ENCODE measurements at regions of chr12 and their contacts with region 1.

Region 1: GRCh38 chr12:49967042-49967776 is 5.5 kb downstream of the AQP5 start:
- DNase-seq: peak; percentile 86 to 95 (median 90)
- ATAC-seq: peak; percentile 61 to 84 (median 78)
- H3K4me3 ChIP-seq: peak overlapping the region in 11 of 12 donors; percentile 6 to 50 (median 37)
- H3K27ac ChIP-seq: no peak overlapping the region
- H3K4me1 ChIP-seq: peaks cover 0 to 22% (median 12%) of the 10 kb centered on the region in 12 donors
- H3K27me3 ChIP-seq: peaks cover 0 to 44% (median 7%) of the 10 kb centered on the region in 9 donors
- CTCF ChIP-seq: peak; percentile 63 to 89 (median 76)
- POLR2A ChIP-seq: no peak

Region 2: GRCh38 chr12:49580572-49581535 is 386.4 kb before region 1 on chr12:
- intact Hi-C with region 1: no loop called
- DNase-seq: peak in 4 of 5 donors; percentile 76 to 83 (median 80)
- ATAC-seq: peak; percentile 68 to 80 (median 79)
- H3K4me3 ChIP-seq: no peak overlapping the region
- H3K27ac ChIP-seq: peak overlapping the region in 9 of 12 donors; percentile 16 to 77 (median 36)
- H3K4me1 ChIP-seq: peaks cover 0 to 57% (median 30%) of the 10 kb centered on the region in 12 donors
- H3K27me3 ChIP-seq: no peaks in the 10 kb centered on the region
- CTCF ChIP-seq: peak; percentile 67 to 88 (median 79)
- POLR2A ChIP-seq: no peak

Region 3: GRCh38 chr12:49866859-49867579 is 100.2 kb before region 1 on chr12:
- intact Hi-C with region 1: loop called in 7 of 10 experiments (anchors 2 to 5 kb)
- DNase-seq: peak; percentile 67 to 79 (median 73)
- ATAC-seq: peak in 2 of 4 donors; percentile 17
- H3K4me3 ChIP-seq: no peak overlapping the region
- H3K27ac ChIP-seq: no peak overlapping the region
- H3K4me1 ChIP-seq: peaks cover 4 to 37% (median 29%) of the 10 kb centered on the region in 12 donors
- H3K27me3 ChIP-seq: peaks cover 0 to 6% (median 0%) of the 10 kb centered on the region in 9 donors
- CTCF ChIP-seq: peak; percentile 94 to 99 (median 98)
- POLR2A ChIP-seq: no peak

Region 4: DNA sequence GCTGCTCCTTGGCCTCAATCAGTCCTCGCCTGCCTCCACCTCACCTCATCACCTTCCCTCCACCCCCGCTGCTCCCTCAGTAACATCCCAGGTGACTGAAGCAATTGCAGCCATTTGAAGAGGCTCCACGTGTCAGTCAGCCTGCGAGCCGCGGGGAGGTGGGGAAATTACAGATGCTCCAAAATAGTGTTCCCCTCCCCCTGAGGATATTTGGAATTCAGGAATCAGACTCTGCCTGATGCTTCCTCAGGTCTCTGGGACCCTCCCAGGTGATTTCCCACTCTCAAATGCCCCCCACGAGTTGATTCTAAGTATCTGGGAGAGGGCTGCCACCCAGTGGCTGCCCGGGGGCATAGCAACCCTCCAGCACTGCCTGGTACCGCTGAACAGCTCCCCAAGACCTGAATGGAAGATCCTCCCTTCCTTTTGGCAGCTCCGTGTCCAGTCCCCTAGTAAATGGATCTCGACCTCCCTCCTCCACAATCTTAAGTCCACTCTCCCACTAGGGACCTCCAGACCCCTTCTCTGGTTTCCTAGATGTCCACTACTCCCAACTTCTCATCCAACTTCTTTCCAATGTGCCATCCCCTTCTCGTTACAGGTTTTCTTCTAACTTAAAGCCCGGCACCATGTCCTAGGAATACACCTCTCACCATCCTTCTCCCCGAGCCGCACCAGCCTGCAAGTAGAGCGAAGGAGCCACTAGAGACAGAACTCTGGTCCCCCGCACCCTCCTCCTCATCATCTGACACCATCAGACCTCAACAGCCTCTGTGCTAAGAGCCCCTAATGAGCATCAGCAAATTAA is 88.8 kb after region 1 on chr12:
- intact Hi-C with region 1: loop called (anchors 1 to 5 kb)
- DNase-seq: peak in 2 of 5 donors; percentile 45 to 64
- ATAC-seq: peak; percentile 55 to 71 (median 58)
- H3K4me3 ChIP-seq: no peak overlapping the region
- H3K27ac ChIP-seq: no peak overlapping the region
- H3K4me1 ChIP-seq: peaks cover 0 to 31% (median 16%) of the 10 kb centered on the region in 12 donors
- H3K27me3 ChIP-seq: peaks cover 0 to 27% (median 0%) of the 10 kb centered on the region in 9 donors
- CTCF ChIP-seq: peak; percentile 76 to 96 (median 95)
- POLR2A ChIP-seq: no peak

Region 5: GRCh38 chr12:50074936-50075807 is 108.0 kb after region 1 on chr12:
- intact Hi-C with region 1: loop called in 6 of 10 experiments (anchors 1 to 5 kb)
- DNase-seq: peak; percentile 81 to 91 (median 84)
- ATAC-seq: peak; percentile 86 to 91 (median 89)
- H3K4me3 ChIP-seq: no peak overlapping the region
- H3K27ac ChIP-seq: no peak overlapping the region
- H3K4me1 ChIP-seq: peaks cover 0 to 13% (median 3%) of the 10 kb centered on the region in 12 donors
- H3K27me3 ChIP-seq: no peaks in the 10 kb centered on the region
- CTCF ChIP-seq: peak; percentile 87 to 96 (median 93)
- POLR2A ChIP-seq: no peak

Region 6: GRCh38 chr12:50187084-50187900 is 220.1 kb after region 1 on chr12:
- intact Hi-C with region 1: loop called in 1 of 10 experiments (anchors 10 kb)
- DNase-seq: no peak
- ATAC-seq: peak in 2 of 4 donors; percentile 23 to 25
- H3K4me3 ChIP-seq: no peak overlapping the region
- H3K27ac ChIP-seq: peak overlapping the region in 6 of 12 donors; percentile 15 to 76 (median 36)
- H3K4me1 ChIP-seq: peaks cover 0 to 57% (median 28%) of the 10 kb centered on the region in 12 donors
- H3K27me3 ChIP-seq: no peaks in the 10 kb centered on the region
- CTCF ChIP-seq: no peak
- POLR2A ChIP-seq: no peak

Measured in heart left ventricle (tissue), 16 donors.